CD4-positive, alpha-beta T cell (primary cell): ENCODE measurements at regions of chr19 and their contacts with region 1.

Region 1: DNA sequence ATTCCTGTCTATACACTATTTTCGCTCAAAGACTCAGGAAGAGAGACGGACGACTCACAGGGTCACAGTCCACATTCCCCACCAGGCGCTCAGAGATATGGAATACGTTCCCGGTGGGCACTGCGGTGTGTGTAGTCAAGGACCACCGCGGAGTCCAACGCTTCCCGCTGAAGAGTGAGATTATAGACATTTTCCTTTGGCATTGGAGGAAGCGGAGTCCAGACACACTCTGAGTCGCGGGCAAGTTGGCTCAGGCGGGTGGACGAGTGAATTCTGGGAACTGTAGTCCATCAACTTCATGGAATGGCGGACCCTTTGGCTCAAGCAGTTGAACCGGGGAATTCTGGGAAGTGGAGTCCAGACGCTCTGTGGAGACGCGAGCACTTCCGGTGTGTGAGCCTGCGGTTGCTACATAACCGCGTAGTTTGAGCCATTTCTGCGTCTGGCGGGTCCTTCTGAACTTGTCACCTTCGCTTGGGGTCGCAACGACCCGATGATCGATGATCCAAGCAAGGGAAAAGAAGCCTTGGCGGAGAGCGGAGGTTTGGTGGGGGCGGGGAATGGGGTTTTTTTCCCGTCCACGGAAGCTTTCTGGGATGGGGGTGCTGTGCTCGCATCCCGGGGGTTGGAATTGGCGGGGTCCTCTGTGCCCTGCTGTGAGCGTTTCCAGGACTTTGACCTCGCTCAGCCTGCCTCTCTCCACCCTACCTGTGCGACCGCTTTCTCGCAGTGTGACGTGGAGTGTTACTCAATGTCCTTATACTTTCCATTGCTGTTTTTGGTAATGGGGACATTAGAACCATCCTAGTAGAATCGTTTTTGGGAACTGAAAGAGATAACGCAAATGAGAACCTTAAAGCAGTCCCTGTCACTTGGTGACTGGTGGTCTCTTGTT is at the start of gene ZNF230:
- DNase-seq: peak; percentile 56 to 96 (median 75)
- ATAC-seq: peak; percentile 97
- H3K4me3 ChIP-seq: peak within 1 kb of the TSS; percentile 84
- H3K4me3 Mint-ChIP-seq: peak within 1 kb of the TSS; percentile 100
- H3K27ac ChIP-seq: peak within 1 kb of the TSS; percentile 39 to 53
- H3K27ac Mint-ChIP-seq: peak within 1 kb of the TSS; percentile 90
- H3K4me1 ChIP-seq: peaks cover 18% of the 10 kb centered on the region
- H3K4me1 Mint-ChIP-seq: peaks cover 29% of the 10 kb centered on the region
- H3K27me3 ChIP-seq: no peaks in the 10 kb centered on the region
- H3K27me3 Mint-ChIP-seq: no peaks in the 10 kb centered on the region
- CTCF ChIP-seq: no peak
- total RNA-seq, gene ZNF230: 2.2 to 2.8 TPM

Region 2: GRCh38 chr19:43983912-43984686 is 18.7 kb before region 1 on chr19 and contains the start of gene ZNF155:
- CTCF ChIA-PET with region 1: interaction called, 3 read pairs
- POLR2A ChIA-PET with region 1: no interaction called
- intact Hi-C with region 1: loop called (anchors 1 to 2 kb)
- DNase-seq: peak; percentile 39 to 88 (median 56)
- ATAC-seq: peak; percentile 88
- H3K4me3 ChIP-seq: peak within 1 kb of the TSS; percentile 85
- H3K4me3 Mint-ChIP-seq: peak within 1 kb of the TSS; percentile 97
- H3K27ac ChIP-seq: peak within 1 kb of the TSS in 1 of 2 donors; percentile 72
- H3K27ac Mint-ChIP-seq: peak within 1 kb of the TSS; percentile 83
- H3K4me1 ChIP-seq: peaks cover 16% of the 10 kb centered on the region
- H3K4me1 Mint-ChIP-seq: peaks cover 22% of the 10 kb centered on the region
- H3K27me3 ChIP-seq: no peaks in the 10 kb centered on the region
- H3K27me3 Mint-ChIP-seq: no peaks in the 10 kb centered on the region
- CTCF ChIP-seq: no peak
- total RNA-seq, gene ZNF155: 3.5 to 4.0 TPM

Region 3: DNA sequence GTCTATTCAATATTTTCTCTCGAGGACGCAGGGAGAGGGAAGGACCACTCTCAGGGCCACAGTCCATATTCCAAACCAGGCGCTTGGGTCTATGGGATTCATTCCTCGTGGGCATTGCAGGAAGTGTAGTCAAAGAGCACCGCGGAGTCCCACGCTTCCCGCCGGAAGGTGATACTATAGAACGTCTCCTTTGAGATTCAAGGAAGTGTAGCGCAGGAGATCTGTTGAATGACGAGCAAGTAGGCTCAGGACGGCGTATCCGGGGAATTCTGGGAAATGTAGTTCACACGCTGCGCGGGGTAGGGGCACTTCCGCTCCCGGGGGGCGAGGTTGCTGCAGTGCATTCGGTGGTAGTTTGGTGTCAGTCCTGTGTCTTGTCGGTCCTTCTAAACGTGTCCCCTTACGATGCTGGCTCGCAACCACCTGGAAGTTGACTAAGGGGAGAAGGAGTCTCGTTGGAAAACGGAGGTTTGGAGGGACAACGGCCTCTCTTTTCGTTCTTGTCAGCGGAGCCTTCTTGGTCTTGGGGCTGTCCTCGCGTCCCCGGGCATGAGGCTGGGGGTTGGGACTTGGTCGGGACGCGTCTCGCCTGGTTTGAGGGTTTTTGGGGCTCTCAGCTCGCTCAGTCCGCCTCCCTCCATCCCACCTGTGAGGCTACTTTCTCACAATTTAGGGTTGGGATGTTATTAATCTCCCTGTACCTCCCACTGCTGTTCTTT is 69.2 kb after region 1 on chr19 and contains the start of gene ZNF284:
- CTCF ChIA-PET with region 1: no interaction called
- POLR2A ChIA-PET with region 1: no interaction called
- intact Hi-C with region 1: loop called in 1 of 2 experiments (anchors 5 kb)
- DNase-seq: peak; percentile 65 to 93 (median 78)
- ATAC-seq: peak; percentile 98
- H3K4me3 ChIP-seq: peak within 1 kb of the TSS; percentile 78
- H3K4me3 Mint-ChIP-seq: peak within 1 kb of the TSS; percentile 90
- H3K27ac ChIP-seq: peak within 1 kb of the TSS; percentile 39 to 43
- H3K27ac Mint-ChIP-seq: peak within 1 kb of the TSS; percentile 79
- H3K4me1 ChIP-seq: peaks cover 18% of the 10 kb centered on the region
- H3K4me1 Mint-ChIP-seq: peaks cover 24% of the 10 kb centered on the region
- H3K27me3 ChIP-seq: no peaks in the 10 kb centered on the region
- H3K27me3 Mint-ChIP-seq: no peaks in the 10 kb centered on the region
- CTCF ChIP-seq: no peak
- total RNA-seq, gene ZNF284: 0.92 to 1.2 TPM

Region 4: GRCh38 chr19:44207126-44207803 is 204.5 kb after region 1 on chr19:
- CTCF ChIA-PET with region 1: no interaction called
- POLR2A ChIA-PET with region 1: no interaction called
- intact Hi-C with region 1: loop called in 1 of 2 experiments (anchors 2 kb)
- DNase-seq: peak; percentile 51 to 91 (median 71)
- ATAC-seq: peak; percentile 81
- H3K4me3 ChIP-seq: peak overlapping the region; percentile 85
- H3K4me3 Mint-ChIP-seq: peak overlapping the region; percentile 78
- H3K27ac ChIP-seq: peak overlapping the region; percentile 64 to 76
- H3K27ac Mint-ChIP-seq: peak overlapping the region; percentile 67
- H3K4me1 ChIP-seq: peaks cover 10% of the 10 kb centered on the region
- H3K4me1 Mint-ChIP-seq: peaks cover 14% of the 10 kb centered on the region
- H3K27me3 ChIP-seq: peaks cover 0 to 7% of the 10 kb centered on the region in 2 experiments
- H3K27me3 Mint-ChIP-seq: peaks cover 10% of the 10 kb centered on the region
- CTCF ChIP-seq: no peak